ENCODE measurements at regions of chr10 and their contacts with region 1.

Region 1: GRCh38 chr10:6667679-6668270 is 87.7 kb upstream of the PRKCQ start:
- DNase-seq: peak in 41 of 42 donors; percentile 7 to 90 (median 65)

Region 2: DNA sequence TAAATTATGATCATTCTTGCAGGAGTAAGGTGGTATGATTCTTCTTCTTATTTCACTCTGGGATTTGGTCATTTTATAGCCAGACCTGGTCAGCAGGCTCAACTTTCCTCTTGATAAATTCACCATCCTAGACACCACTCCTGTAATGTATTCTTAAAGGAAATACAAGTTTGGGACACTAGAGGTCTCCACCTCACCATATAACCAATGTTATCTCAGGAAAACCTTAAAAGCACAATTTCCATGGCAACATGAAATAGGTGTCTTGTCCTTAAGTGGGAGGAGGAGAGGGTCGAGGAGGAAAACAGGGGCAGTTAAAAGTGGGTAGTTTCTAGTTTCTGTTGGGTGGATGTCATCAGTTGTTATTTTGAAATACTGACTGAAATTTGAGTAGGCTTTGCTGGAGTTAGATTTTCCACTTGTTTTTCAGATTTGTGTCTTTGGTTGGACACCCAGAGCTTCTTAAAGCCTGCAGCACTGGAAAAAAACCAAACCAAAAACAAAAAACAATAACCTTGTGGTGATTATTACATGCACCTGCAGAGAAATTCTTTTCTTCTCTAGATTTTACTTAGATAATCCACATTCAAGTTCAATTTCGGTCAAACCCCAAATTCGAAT is 250.8 kb before region 1 on chr10:
- intact Hi-C with region 1: loop called (anchors 5 kb)
- DNase-seq: peak in 3 of 42 donors; percentile 17 to 42 (median 34)

Region 3: GRCh38 chr10:7417103-7417623 is 749.4 kb after region 1 on chr10:
- intact Hi-C with region 1: loop called (anchors 5 kb)
- DNase-seq: peak in 1 of 42 donors; percentile 17

Measured in head of caudate nucleus (tissue), 42 donors.